Lower leg skin (tissue), 4 donors: ENCODE measurements at regions of chr2 and their contacts with region 1.

Region 1: GRCh38 chr2:106965611-106966010 is 79.6 kb upstream of the ST6GAL2 start:
- DNase-seq: no peak
- H3K4me3 ChIP-seq: no peak overlapping the region
- CTCF ChIP-seq: no peak
- POLR2A ChIP-seq: no peak

Region 2: GRCh38 chr2:107556038-107556627 is 590.5 kb after region 1 on chr2:
- intact Hi-C with region 1: loop called (anchors 5 kb)
- DNase-seq: no peak
- H3K4me3 ChIP-seq: no peak overlapping the region
- CTCF ChIP-seq: no peak
- POLR2A ChIP-seq: no peak

Region 3: GRCh38 chr2:108199726-108200125 is 1234.1 kb after region 1 on chr2:
- intact Hi-C with region 1: no loop called
- DNase-seq: no peak
- H3K4me3 ChIP-seq: no peak overlapping the region
- CTCF ChIP-seq: no peak
- POLR2A ChIP-seq: no peak